HEK293 (cell line): ENCODE measurements at regions of chr10 and their contacts with region 1.

Region 1: DNA sequence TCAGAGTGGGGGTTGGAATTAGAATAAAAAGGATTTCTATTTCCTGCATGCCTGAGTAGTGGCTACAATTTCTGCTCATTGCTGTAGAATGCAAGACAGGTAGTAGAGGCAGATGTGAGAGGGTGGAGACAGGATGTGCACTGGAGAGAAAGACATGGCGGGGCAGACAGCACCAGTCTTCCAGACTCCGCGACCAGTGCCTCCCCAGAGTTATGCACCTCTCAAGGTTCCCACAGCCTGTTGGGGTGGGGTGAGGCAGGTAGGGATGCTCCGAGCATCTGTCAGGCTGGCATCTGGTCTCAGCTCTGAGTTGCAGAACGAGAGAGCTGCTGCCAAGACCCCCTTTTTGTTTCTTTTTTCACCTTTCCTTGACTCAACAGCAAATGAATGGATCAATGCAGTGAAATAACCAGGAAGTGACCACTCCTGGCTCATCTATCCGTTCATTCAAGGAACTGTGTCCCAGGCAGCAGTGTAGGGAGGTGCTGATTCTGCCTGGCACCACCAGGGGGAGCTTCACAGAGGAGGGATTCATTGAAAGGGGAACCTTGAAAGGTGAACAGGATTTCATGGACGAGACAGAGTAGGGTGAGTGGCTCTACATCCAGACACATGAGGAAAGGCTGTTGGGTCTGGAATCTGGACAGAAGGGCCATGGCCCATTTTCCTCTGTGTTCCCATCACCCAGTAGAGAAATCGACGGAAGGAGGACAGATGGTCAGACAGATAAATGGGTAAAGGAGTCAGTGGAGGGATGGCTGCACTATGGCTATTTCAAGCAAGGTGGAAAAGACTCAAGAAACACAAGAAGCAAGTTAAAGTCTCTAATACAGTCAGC is 17.2 kb upstream of the SLC18A3 start:
- H3K4me3 ChIP-seq: no peak overlapping the region
- H3K27ac ChIP-seq: no peak overlapping the region
- H3K4me1 ChIP-seq: no peaks in the 10 kb centered on the region
- CTCF ChIP-seq: peak; percentile 39; the same call in 1 of the 2 replicates

Region 2: GRCh38 chr10:49426592-49427360 is 166.2 kb before region 1 on chr10:
- CTCF ChIA-PET with region 1: no interaction called
- POLR2A ChIA-PET with region 1: no interaction called
- H3K4me3 ChIP-seq: no peak overlapping the region
- H3K27ac ChIP-seq: no peak overlapping the region
- H3K4me1 ChIP-seq: no peaks in the 10 kb centered on the region
- CTCF ChIP-seq: no peak

Region 3: GRCh38 chr10:49609908-49610734 is 17.2 kb after region 1 on chr10 and contains the start of gene SLC18A3:
- CTCF ChIA-PET with region 1: interaction called, 10 read pairs
- POLR2A ChIA-PET with region 1: no interaction called
- H3K4me3 ChIP-seq: no peak within 1 kb of the TSS
- H3K27ac ChIP-seq: no peak within 1 kb of the TSS
- H3K4me1 ChIP-seq: no peaks in the 10 kb centered on the region; the same call in 1 of the 2 replicates
- CTCF ChIP-seq: no peak

Region 4: GRCh38 chr10:50224330-50224952 is 631.5 kb after region 1 on chr10:
- CTCF ChIA-PET with region 1: interaction called, 35 read pairs
- POLR2A ChIA-PET with region 1: no interaction called
- H3K4me3 ChIP-seq: no peak overlapping the region
- H3K27ac ChIP-seq: no peak overlapping the region
- H3K4me1 ChIP-seq: no peaks in the 10 kb centered on the region
- CTCF ChIP-seq: peak; percentile 60